CD4-positive, alpha-beta memory T cell (primary cell): ENCODE measurements at regions of chr16 and their contacts with region 1.

Region 1: DNA sequence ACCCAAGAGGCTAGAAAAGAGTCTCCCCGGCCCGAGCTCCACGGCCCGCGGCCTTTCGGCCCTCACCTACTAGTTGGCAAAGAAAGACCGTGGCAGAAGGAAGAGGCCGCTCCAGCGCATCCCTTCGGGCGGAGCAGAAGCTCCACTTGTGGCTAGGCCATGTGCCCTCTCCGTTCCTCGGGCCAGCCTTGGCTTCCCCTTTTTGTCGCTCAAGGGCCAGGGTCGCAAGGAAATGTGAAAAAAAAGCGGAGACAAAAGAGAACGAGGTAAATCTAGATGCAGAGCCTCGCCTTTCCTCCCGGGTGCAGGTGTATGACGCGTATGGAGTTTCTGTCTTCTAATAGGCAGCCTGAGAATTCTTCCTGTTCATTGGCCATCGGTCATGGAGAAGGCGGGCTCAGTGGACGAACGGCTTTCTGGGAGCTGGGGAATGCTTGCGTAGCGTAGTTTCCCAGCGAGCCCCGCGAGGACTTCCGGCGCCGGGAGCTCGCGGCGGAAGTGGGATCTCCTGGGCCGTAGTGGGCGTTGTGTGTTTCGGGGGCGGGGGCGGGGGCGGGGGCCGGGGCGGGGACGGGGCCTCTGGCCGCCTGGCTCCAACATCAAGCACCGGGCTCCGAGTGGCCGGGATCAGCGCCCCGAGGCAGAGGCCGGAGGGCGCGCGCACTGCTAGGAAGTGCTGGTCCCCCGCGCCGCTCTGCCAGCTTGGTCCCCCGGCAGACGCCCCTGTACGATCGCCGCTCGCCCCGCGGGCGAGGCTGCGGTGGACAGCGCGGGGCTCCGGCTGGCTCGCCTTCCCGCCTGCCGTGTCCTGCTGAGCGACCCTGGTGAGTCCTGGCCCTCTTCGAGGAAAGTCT is at the start of gene ZNF213:
- DNase-seq: peak; percentile 92 to 98 (median 96)
- H3K4me3 ChIP-seq: peak within 1 kb of the TSS; percentile 89 to 97
- H3K4me3 Mint-ChIP-seq: peak within 1 kb of the TSS; percentile 93 to 99 (median 98)
- H3K27ac ChIP-seq: peak within 1 kb of the TSS; percentile 93
- H3K27ac Mint-ChIP-seq: peak within 1 kb of the TSS; percentile 94 to 99 (median 99)
- H3K4me1 ChIP-seq: peaks cover 28% of the 10 kb centered on the region
- H3K4me1 Mint-ChIP-seq: peaks cover 12 to 44% (median 23%) of the 10 kb centered on the region in 4 donors
- H3K27me3 ChIP-seq: no peaks in the 10 kb centered on the region
- H3K27me3 Mint-ChIP-seq: no peaks in the 10 kb centered on the region
- total RNA-seq, gene ZNF213: 14.1 to 14.5 TPM

Region 2: DNA sequence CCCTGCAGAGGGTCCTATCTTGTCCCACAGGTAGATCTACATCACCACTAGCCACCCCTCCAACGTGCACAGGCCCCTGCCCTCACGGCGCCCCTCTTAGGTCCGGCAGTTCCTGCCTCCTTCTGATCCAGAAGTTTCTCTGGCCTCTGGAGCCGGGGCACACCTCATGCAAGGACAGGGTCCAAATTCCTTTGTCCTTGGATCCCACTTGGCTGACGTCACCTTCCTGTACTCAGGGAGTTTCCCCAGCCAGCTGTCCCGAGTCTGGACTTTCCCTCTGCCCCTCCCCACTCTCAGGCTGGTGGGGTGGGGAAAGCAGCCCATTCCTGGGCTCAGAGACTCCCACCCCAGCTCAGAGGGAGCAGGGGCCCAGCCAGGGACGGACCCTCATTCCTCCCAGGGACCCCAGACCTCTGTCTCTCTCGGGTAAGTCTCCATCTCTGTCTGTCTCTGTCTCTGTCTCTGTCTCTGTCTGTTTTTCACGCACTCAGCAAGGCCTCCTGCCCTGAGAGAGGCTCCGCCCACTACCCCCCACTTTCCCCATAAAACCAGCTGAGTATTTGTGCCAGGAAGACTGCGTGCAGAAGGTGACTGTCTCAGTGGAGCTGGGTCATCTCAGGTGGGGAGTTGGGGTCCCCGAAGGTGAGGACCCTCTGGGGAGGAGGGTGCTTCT is 69.6 kb before region 1 on chr16 and contains the start of gene IL32:
- CTCF ChIA-PET with region 1: interaction called, 362 read pairs
- POLR2A ChIA-PET with region 1: interaction called, 129 read pairs
- intact Hi-C with region 1: no loop called
- DNase-seq: peak; percentile 64 to 85 (median 66)
- H3K4me3 ChIP-seq: peak within 1 kb of the TSS; percentile 98
- H3K4me3 Mint-ChIP-seq: peak within 1 kb of the TSS; percentile 98 to 100 (median 100)
- H3K27ac ChIP-seq: peak within 1 kb of the TSS; percentile 98
- H3K27ac Mint-ChIP-seq: peak within 1 kb of the TSS; percentile 91 to 99 (median 96)
- H3K4me1 ChIP-seq: peaks cover 72% of the 10 kb centered on the region
- H3K4me1 Mint-ChIP-seq: peaks cover 34 to 84% (median 55%) of the 10 kb centered on the region in 4 donors
- H3K27me3 ChIP-seq: no peaks in the 10 kb centered on the region
- H3K27me3 Mint-ChIP-seq: no peaks in the 10 kb centered on the region
- total RNA-seq, gene IL32: 752 to 810 TPM

Region 3: DNA sequence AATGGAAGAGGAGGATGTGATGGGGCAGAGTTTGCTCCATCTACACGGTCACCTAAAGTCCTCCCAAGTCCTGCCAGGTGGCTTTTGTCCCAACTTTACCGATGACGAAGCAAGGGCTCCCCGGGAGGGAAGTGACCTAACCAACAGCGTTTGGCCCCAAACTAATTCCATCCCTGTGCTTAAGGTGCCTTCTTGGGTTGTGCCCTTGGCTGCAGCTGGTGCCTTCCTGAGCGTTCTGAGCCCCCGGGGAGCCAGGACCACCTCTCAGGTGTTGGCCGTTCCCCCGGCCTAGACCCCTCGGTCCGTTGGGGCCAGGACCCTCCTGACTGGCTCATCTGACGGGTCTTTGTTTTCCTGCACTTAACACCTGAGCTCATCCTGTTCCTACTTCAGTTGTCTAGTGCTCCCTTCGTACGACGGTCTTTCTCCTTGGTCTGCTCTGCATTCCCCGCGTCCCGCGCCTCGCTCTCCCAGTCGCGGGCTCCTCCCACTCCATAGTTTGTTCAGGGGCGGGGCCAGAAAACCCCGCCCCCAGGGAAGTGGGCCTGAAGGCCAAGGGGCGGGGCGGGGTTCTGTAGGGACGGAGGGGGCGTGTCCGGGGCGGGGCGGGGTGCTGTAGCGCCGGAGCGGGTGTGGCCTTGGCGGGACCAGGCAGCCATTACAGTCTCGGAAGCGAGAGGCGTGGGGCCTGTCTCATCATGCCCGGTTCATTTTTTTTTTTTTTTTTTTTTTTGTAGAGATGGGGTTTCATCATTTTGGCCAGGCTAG is 34.9 kb before region 1 on chr16:
- CTCF ChIA-PET with region 1: interaction called, 376 read pairs
- POLR2A ChIA-PET with region 1: interaction called, 146 read pairs
- intact Hi-C with region 1: loop called (anchors 1 kb)
- DNase-seq: peak; percentile 80 to 89 (median 82)
- H3K4me3 ChIP-seq: peak overlapping the region; percentile 19 to 23
- H3K4me3 Mint-ChIP-seq: peak overlapping the region; percentile 77 to 90 (median 86)
- H3K27ac ChIP-seq: peak overlapping the region; percentile 33
- H3K27ac Mint-ChIP-seq: peak overlapping the region; percentile 82 to 97 (median 93)
- H3K4me1 ChIP-seq: peaks cover 58% of the 10 kb centered on the region
- H3K4me1 Mint-ChIP-seq: peaks cover 19 to 68% (median 44%) of the 10 kb centered on the region in 4 donors
- H3K27me3 ChIP-seq: no peaks in the 10 kb centered on the region
- H3K27me3 Mint-ChIP-seq: no peaks in the 10 kb centered on the region

Region 4: GRCh38 chr16:3123986-3124886 is 10.6 kb before region 1 on chr16:
- CTCF ChIA-PET with region 1: interaction called, 46 read pairs
- POLR2A ChIA-PET with region 1: interaction called, 26 read pairs
- intact Hi-C with region 1: loop called (anchors 1 kb)
- DNase-seq: peak; percentile 96 to 97 (median 96)
- H3K4me3 ChIP-seq: peak overlapping the region; percentile 85 to 97
- H3K4me3 Mint-ChIP-seq: peak overlapping the region; percentile 94 to 98 (median 96)
- H3K27ac ChIP-seq: peak overlapping the region; percentile 50
- H3K27ac Mint-ChIP-seq: peak overlapping the region; percentile 95 to 99 (median 97)
- H3K4me1 ChIP-seq: peaks cover 40% of the 10 kb centered on the region
- H3K4me1 Mint-ChIP-seq: peaks cover 18 to 52% (median 32%) of the 10 kb centered on the region in 4 donors
- H3K27me3 ChIP-seq: no peaks in the 10 kb centered on the region
- H3K27me3 Mint-ChIP-seq: no peaks in the 10 kb centered on the region

Region 5: GRCh38 chr16:3158471-3159314 is 23.9 kb after region 1 on chr16:
- CTCF ChIA-PET with region 1: interaction called, 36 read pairs
- POLR2A ChIA-PET with region 1: interaction called, 72 read pairs
- intact Hi-C with region 1: loop called (anchors 1 kb)
- DNase-seq: peak; percentile 92 to 98 (median 94)
- H3K4me3 ChIP-seq: peak overlapping the region; percentile 65 to 66
- H3K4me3 Mint-ChIP-seq: peak overlapping the region; percentile 83 to 96 (median 92)
- H3K27ac ChIP-seq: peak overlapping the region; percentile 62
- H3K27ac Mint-ChIP-seq: peak overlapping the region; percentile 92 to 100 (median 96)
- H3K4me1 ChIP-seq: peaks cover 25% of the 10 kb centered on the region
- H3K4me1 Mint-ChIP-seq: peaks cover 11 to 36% (median 25%) of the 10 kb centered on the region in 4 donors
- H3K27me3 ChIP-seq: no peaks in the 10 kb centered on the region
- H3K27me3 Mint-ChIP-seq: peaks cover 0 to 2% of the 10 kb centered on the region in 2 donors

Region 6: GRCh38 chr16:3173892-3174617 is 39.3 kb after region 1 on chr16:
- CTCF ChIA-PET with region 1: interaction called, 9 read pairs
- POLR2A ChIA-PET with region 1: interaction called, 19 read pairs
- intact Hi-C with region 1: no loop called
- DNase-seq: no peak
- H3K4me3 ChIP-seq: no peak overlapping the region
- H3K4me3 Mint-ChIP-seq: peak overlapping the region in 7 of 8 donors; percentile 4 to 58 (median 35)
- H3K27ac ChIP-seq: no peak overlapping the region
- H3K27ac Mint-ChIP-seq: peak overlapping the region in 2 of 7 donors; percentile 17 to 75
- H3K4me1 ChIP-seq: peaks cover 48% of the 10 kb centered on the region
- H3K4me1 Mint-ChIP-seq: peaks cover 18 to 46% (median 35%) of the 10 kb centered on the region in 4 donors
- H3K27me3 ChIP-seq: peaks cover 38% of the 10 kb centered on the region
- H3K27me3 Mint-ChIP-seq: peaks cover 39 to 41% of the 10 kb centered on the region in 2 donors